Heart right ventricle (tissue), 16 donors: ENCODE measurements at regions of chr3 and their contacts with region 1.

Region 1: GRCh38 chr3:188389711-188390342 is 235.9 kb downstream of the LPP start:
- DNase-seq: peak in 1 of 2 donors; percentile 56
- ATAC-seq: peak; percentile 78 to 93 (median 89)
- H3K4me3 ChIP-seq: no peak overlapping the region
- H3K27ac ChIP-seq: peak overlapping the region in 7 of 10 donors; percentile 36 to 67 (median 62)
- H3K4me1 ChIP-seq: peaks cover 0 to 45% (median 37%) of the 10 kb centered on the region in 9 donors
- H3K27me3 ChIP-seq: no peaks in the 10 kb centered on the region
- CTCF ChIP-seq: no peak

Region 2: GRCh38 chr3:187368251-187369088 is 1021.4 kb before region 1 on chr3 and contains the start of gene RTP4:
- intact Hi-C with region 1: loop called in 1 of 10 experiments (anchors 10 kb)
- DNase-seq: peak in 1 of 2 donors; percentile 50
- ATAC-seq: peak in 7 of 8 donors; percentile 70 to 90 (median 87)
- H3K4me3 ChIP-seq: peak within 1 kb of the TSS; percentile 33 to 67 (median 55)
- H3K27ac ChIP-seq: peak within 1 kb of the TSS; percentile 73 to 96 (median 89)
- H3K4me1 ChIP-seq: peaks cover 0 to 23% (median 13%) of the 10 kb centered on the region in 9 donors
- H3K27me3 ChIP-seq: no peaks in the 10 kb centered on the region
- CTCF ChIP-seq: no peak
- total RNA-seq, gene RTP4: 0.74 to 4.7 (median 1.6) TPM

Region 3: DNA sequence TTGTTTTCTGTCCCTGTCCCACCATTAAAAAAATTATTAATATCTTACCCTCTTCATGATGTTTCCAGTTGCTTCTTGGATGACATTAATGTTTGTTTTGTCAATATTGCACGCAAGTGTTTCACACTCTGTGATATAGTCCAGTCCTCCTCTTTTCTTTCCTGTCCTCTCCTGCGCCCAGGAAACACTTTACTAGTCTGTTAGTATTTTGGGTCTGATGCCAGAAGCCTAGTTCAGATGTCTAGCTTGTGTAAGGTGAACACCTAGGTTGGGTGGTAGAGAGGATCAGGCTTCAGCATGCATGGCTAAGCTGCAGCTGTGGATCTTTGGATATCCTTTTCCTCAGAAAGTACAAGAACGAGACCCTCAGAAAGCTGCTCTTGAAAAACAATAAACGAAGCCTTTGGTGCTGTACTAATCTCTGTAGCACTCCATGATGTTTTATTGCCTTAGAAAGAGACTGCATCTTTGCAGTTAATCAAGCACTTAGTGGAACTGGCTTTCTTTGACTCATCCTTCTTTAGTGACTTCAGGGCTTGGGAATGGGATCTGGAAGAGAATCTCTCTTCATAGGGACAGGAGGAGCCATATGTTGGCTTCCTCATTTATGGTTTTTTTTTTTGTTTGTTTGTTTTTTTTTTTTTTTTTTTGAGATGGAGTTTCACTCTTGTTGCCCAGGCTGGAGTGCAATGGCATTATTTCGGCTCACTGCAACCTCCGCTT is 17.5 kb after region 1 on chr3:
- intact Hi-C with region 1: no loop called
- DNase-seq: no peak
- ATAC-seq: peak in 1 of 8 donors; percentile 12
- H3K4me3 ChIP-seq: no peak overlapping the region
- H3K27ac ChIP-seq: no peak overlapping the region
- H3K4me1 ChIP-seq: peaks cover 0 to 13% (median 0%) of the 10 kb centered on the region in 9 donors
- H3K27me3 ChIP-seq: no peaks in the 10 kb centered on the region
- CTCF ChIP-seq: no peak